ENCODE measurements at regions of chr9 and their contacts with region 1.

Region 1: GRCh38 chr9:127698985-127699670 is 7.7 kb upstream of the CFAP157 start:
- ATAC-seq: peak; percentile 78 to 97 (median 93)
- H3K4me3 ChIP-seq: peak overlapping the region in 4 of 5 donors; percentile 16 to 26 (median 22)
- H3K27ac ChIP-seq: no peak overlapping the region
- H3K4me1 ChIP-seq: peaks cover 0 to 5% of the 10 kb centered on the region in 2 donors

Region 2: DNA sequence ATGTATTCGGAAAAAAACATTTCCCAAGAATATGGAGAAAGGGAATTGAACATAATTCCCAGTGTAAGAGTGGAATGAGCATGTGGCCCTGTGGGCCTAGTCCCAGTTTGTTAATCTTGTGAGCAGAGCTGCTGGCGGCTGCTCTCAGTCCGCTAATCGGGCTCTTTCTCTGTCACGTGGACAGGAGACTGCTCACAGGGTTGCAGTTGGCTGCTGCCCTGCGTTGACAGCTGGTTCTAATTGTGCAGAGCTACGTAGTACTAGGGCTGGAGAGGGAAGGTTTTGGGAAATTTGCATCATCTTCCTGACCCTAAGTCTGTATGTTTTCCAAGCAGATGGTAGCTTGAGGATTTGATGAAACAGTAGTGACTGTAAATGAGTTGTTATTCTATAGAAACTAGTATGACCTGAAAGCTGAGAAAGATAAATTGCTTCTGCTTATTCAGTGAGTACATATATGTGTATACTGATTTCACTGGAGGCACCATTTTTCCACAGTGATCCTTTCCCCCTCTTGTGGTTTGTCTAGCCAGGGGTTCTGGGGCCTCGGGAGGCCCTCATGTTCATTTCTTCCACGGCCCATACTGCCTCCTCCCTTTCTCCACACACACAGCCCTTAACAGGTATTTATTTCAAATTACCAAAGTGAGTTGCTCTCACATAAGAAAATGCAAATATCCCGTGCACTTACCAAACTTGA is 677.3 kb before region 1 on chr9:
- in situ Hi-C with region 1: no loop called
- ATAC-seq: peak; percentile 99 to 100 (median 100)
- H3K4me3 ChIP-seq: no peak overlapping the region
- H3K27ac ChIP-seq: peak overlapping the region; percentile 42 to 61
- H3K4me1 ChIP-seq: peaks cover 4 to 12% of the 10 kb centered on the region in 2 donors

Region 3: GRCh38 chr9:127336738-127337251 is 362.3 kb before region 1 on chr9:
- in situ Hi-C with region 1: no loop called
- ATAC-seq: peak in 3 of 8 experiments; percentile 85 to 92 (median 88)
- H3K4me3 ChIP-seq: no peak overlapping the region
- H3K27ac ChIP-seq: no peak overlapping the region
- H3K4me1 ChIP-seq: no peaks in the 10 kb centered on the region

Region 4: GRCh38 chr9:127503947-127504782 is 195.0 kb before region 1 on chr9:
- in situ Hi-C with region 1: loop called in 1 of 9 experiments (anchors 25 kb)
- ATAC-seq: peak; percentile 63 to 89 (median 74)
- H3K4me3 ChIP-seq: no peak overlapping the region
- H3K27ac ChIP-seq: no peak overlapping the region
- H3K4me1 ChIP-seq: no peaks in the 10 kb centered on the region

Measured in motor neuron (in vitro differentiated cells).